ENCODE measurements at regions of chr2 and their contacts with region 1.

Region 1: DNA sequence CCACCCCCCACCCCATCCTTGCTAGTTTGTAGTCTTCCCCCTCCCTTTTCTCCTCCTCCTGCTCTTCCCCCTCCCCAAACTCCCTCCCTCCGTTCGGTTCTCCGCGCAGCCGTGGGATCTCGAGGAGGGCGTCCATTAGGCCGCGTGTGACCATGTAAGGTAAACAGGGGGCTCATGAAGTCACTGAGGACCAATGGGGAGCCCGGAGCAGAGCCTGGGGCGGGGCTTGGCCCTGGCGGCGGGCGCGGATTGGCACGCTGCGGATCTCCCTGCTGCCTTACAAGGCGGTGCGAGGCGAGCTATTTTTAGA is 246 bp upstream of the KLF7 start:
- DNase-seq: peak; percentile 99
- H3K4me3 Mint-ChIP-seq: peak overlapping the region; percentile 98
- H3K27ac Mint-ChIP-seq: peak overlapping the region; percentile 96
- H3K4me1 Mint-ChIP-seq: peaks cover 46% of the 10 kb centered on the region
- H3K27me3 Mint-ChIP-seq: no peaks in the 10 kb centered on the region

Region 2: GRCh38 chr2:206890926-206891325 is 275.1 kb before region 1 on chr2:
- intact Hi-C with region 1: no loop called
- DNase-seq: no peak
- H3K4me3 Mint-ChIP-seq: no peak overlapping the region
- H3K27ac Mint-ChIP-seq: no peak overlapping the region
- H3K4me1 Mint-ChIP-seq: no peaks in the 10 kb centered on the region
- H3K27me3 Mint-ChIP-seq: peaks cover 7% of the 10 kb centered on the region

Region 3: DNA sequence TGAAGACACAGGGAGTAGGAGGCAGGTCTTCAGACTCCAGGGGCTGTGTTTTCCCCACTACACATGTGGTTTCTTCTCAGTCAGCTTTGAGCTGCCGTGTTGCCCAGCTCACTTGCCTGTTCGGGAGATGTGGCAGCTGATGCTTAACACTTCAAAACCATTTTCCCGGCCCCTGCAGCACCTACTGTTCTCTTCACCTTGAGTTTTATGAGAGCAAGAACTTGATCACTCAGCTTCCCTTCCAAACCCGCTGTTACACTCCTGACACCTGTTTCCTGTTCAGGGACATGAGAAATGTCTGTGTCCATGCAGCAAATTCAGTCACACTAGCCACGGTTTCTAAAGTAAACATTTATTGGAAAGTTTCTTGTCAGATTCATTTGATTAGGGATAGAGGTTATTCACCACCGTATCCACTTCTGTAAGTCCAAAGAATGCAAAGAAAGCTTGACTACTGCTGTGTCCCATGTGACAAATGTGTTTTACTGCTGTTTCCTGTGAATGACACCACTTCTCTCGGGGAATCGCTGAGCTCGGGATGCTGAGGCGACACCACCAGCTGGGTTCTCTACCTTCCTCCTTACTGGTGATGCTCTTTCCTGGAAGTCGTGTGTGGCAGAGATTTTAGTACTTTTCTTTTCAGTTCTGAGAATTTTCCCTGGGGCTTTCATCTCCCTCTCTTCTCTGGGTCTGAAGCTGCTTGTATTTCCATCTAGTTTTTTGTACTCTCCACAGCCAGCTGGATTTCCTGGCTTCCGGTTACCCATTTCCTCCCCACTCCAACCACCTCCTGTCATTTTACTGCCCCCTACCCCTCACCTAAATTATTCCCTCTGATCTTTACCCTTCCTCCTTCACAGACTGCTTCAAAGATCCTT is 92.0 kb before region 1 on chr2:
- intact Hi-C with region 1: loop called (anchors 2 kb)
- DNase-seq: peak; percentile 84
- H3K4me3 Mint-ChIP-seq: peak overlapping the region; percentile 74
- H3K27ac Mint-ChIP-seq: peak overlapping the region; percentile 82
- H3K4me1 Mint-ChIP-seq: peaks cover 31% of the 10 kb centered on the region
- H3K27me3 Mint-ChIP-seq: no peaks in the 10 kb centered on the region

Region 4: GRCh38 chr2:207149249-207150213 is 16.5 kb before region 1 on chr2:
- intact Hi-C with region 1: loop called (anchors 1 kb)
- DNase-seq: no peak
- H3K4me3 Mint-ChIP-seq: no peak overlapping the region
- H3K27ac Mint-ChIP-seq: no peak overlapping the region
- H3K4me1 Mint-ChIP-seq: peaks cover 54% of the 10 kb centered on the region
- H3K27me3 Mint-ChIP-seq: peaks cover 4% of the 10 kb centered on the region

Region 5: DNA sequence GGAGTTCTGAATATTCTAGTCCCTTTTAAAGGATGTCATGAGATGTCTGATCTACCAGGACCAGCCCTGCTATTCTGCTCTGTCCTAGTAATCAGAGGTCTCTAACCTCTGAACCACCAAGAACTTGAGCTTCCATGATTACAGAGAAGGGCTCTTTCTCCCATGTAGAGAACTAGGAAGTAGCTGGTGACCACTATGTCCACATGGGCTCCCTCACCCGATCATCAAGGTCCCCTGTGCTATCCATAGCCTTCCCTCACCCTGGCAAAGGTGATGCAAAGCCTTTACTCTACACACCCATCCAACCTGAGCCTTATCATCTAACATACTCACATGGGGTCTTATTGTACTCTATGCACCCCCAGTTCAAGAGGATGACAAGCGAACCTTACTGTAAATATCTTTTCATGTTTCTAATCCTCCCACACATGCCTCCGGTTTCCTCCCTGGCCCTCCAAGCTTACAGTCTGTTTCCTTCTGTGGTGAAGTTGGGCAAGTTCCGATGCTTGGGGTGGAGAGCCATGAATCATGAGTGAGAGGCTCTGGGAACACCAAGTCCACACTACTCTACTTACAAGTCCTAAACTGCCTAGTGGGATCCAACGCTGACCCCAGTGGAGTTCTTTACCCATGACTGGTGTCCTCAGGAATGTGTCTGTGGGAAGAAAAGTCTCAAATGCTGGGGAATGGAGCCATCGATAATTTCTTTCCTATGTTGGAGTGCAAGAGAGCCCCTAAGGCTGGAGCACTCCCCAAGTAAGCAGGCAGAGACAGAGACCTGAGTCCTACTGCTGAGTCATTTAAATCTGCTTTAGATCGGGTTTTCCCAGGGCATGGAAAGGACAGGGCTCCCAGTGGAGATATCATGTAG is 73.1 kb after region 1 on chr2:
- intact Hi-C with region 1: loop called (anchors 2 kb)
- DNase-seq: peak; percentile 73
- H3K4me3 Mint-ChIP-seq: peak overlapping the region; percentile 49
- H3K27ac Mint-ChIP-seq: peak overlapping the region; percentile 76
- H3K4me1 Mint-ChIP-seq: peaks cover 42% of the 10 kb centered on the region
- H3K27me3 Mint-ChIP-seq: no peaks in the 10 kb centered on the region

Region 6: GRCh38 chr2:207311316-207312005 is 145.5 kb after region 1 on chr2:
- intact Hi-C with region 1: loop called (anchors 1 kb)
- DNase-seq: peak; percentile 74
- H3K4me3 Mint-ChIP-seq: peak overlapping the region; percentile 28
- H3K27ac Mint-ChIP-seq: peak overlapping the region; percentile 64
- H3K4me1 Mint-ChIP-seq: peaks cover 36% of the 10 kb centered on the region
- H3K27me3 Mint-ChIP-seq: no peaks in the 10 kb centered on the region

Region 7: GRCh38 chr2:207529330-207530159 is 363.6 kb after region 1 on chr2 and contains the start of gene CREB1:
- intact Hi-C with region 1: loop called (anchors 5 kb)
- DNase-seq: peak; percentile 100
- H3K4me3 Mint-ChIP-seq: peak within 1 kb of the TSS; percentile 93
- H3K27ac Mint-ChIP-seq: peak within 1 kb of the TSS; percentile 99
- H3K4me1 Mint-ChIP-seq: peaks cover 50% of the 10 kb centered on the region
- H3K27me3 Mint-ChIP-seq: no peaks in the 10 kb centered on the region
- total RNA-seq, gene CREB1: 106 and 107 TPM in 2 replicates